ENCODE measurements at regions of chr20 and their contacts with region 1.

Region 1: GRCh38 chr20:64038565-64039292 is 2.7 kb downstream of the C20orf204 start:
- DNase-seq: no peak
- H3K4me3 ChIP-seq: peak overlapping the region; percentile 40
- CTCF ChIP-seq: peak; percentile 80

Region 2: DNA sequence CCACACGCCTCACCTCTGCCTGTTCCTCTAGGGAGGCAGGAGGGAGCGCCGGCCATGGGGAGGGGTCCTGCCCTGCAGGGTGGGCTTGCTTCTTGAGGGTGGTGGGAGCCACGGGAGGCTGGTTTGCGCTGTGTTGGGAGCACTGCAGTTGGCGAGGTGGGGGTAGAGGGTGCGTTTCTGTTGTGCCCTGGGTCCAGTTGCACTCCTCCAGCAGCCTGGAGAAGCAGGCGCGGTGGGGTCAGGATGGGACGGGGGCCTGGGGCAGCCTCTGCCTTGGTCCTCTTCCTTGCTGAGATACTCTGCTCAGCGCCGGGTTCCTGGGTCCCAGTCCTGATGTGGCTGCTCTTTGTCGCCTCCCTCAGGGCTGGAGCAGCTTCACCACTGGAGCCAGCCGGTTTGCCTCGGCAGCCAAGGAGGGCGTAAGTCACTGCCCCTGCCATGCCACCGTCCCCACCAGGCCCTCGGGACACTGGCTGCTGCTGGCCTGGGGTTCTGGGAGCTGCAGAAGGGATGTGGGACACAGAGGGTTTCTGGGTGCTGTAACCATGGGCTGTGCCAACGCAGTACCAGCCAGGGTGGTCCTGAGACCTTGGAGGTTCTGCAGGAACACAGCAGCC is 757.7 kb before region 1 on chr20:
- CTCF ChIA-PET with region 1: no interaction called
- POLR2A ChIA-PET with region 1: no interaction called
- DNase-seq: no peak
- H3K4me3 ChIP-seq: no peak overlapping the region
- CTCF ChIP-seq: peak; percentile 32

Region 3: DNA sequence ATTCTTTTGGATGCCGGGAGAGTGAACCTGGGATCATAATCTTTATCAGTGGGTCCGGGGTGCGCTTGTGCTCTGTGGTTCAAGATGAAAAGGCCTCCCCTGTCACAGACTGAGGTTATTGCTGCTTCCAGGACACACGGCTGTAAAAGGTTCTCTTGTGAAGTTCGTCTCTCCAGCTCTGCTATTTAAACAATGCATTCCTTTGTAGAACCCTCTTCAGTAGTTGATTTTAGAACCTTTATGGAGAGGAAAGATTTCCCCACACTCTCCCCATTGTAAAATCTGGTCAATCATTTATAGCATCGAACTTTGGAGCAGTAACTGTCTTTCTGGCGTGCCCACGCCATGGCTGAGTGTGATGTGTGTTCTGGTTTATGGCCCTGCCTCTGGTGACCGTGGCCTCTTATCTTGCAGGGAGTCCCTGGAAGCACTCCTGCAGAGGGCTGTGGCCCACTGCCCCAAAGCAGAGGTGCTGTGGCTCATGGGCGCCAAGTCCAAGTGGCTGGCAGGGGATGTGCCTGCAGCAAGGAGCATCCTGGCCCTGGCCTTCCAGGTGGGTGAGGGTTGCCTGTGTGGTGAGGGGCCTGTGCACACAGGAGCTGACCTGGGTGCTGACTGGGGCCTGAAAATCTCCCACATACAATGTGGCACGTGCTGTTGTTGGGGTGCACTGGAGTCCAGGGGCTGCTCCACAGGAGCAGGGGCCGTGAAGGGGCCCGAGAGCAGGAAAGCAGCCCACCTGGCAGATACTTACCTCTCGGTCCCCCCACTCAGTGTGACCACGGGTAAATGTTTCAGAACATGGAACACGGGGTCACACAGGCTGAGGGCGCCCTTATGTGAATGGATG is 14.4 kb before region 1 on chr20:
- CTCF ChIA-PET with region 1: interaction called, 32 read pairs
- POLR2A ChIA-PET with region 1: no interaction called
- DNase-seq: no peak
- H3K4me3 ChIP-seq: no peak overlapping the region
- CTCF ChIP-seq: no peak

Region 4: GRCh38 chr20:64053841-64054661 is 15.3 kb after region 1 on chr20:
- CTCF ChIA-PET with region 1: interaction called, 54 read pairs
- POLR2A ChIA-PET with region 1: no interaction called
- DNase-seq: no peak
- H3K4me3 ChIP-seq: no peak overlapping the region
- CTCF ChIP-seq: peak; percentile 46

Region 5: GRCh38 chr20:64062596-64063388 is 24.1 kb after region 1 on chr20 and contains the start of gene TCEA2:
- CTCF ChIA-PET with region 1: interaction called, 54 read pairs
- POLR2A ChIA-PET with region 1: interaction called, 3 read pairs
- DNase-seq: peak; percentile 68
- H3K4me3 ChIP-seq: peak within 1 kb of the TSS; percentile 84
- CTCF ChIP-seq: no peak

Region 6: DNA sequence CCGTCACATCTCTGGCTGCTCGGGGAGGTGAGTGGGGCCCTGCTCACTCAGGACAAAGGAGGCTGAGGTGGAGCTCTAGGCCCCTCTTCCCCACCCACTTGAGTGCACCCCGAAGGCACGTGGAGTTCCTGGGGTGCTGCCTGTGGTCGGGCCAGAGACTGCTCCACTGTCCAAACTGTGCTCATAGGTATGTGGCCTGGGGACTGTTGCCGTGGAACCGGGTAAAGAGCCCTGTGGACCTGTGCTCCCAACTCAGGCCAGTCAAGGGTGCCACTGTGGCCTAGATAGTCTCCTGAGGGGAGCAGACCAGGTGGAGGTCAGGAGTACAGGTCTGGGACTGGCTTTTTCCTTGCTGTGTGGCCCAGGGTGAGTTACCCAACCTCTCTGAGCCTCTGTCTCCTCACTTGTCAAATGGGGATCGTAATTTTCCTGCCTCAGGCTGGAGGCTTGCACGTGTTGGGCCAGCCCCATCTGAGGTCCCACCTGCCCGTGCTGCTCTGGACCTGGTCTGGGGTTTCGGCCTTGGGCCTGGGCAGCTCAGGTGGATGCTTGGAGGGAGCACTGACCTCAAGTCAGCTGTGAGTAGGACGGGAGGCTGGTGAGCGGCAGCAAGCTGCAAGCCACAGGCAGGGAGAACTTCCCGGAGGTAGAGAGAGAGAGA is 81.1 kb after region 1 on chr20:
- CTCF ChIA-PET with region 1: interaction called, 69 read pairs
- POLR2A ChIA-PET with region 1: no interaction called
- DNase-seq: no peak
- H3K4me3 ChIP-seq: no peak overlapping the region
- CTCF ChIP-seq: no peak